ENCODE measurements at regions of chr1 and their contacts with region 1.

Region 1: GRCh38 chr1:199009447-199009846 is 370.6 kb downstream of the PTPRC start:
- DNase-seq: no peak
- H3K4me3 Mint-ChIP-seq: peak overlapping the region; percentile 35
- H3K27ac Mint-ChIP-seq: peak overlapping the region; percentile 64
- H3K4me1 Mint-ChIP-seq: peaks cover 47% of the 10 kb centered on the region
- H3K27me3 Mint-ChIP-seq: no peaks in the 10 kb centered on the region

Region 2: GRCh38 chr1:198959032-198959431 is 50.4 kb before region 1 on chr1:
- intact Hi-C with region 1: loop called (anchors 5 kb)
- DNase-seq: no peak
- H3K4me3 Mint-ChIP-seq: no peak overlapping the region
- H3K27ac Mint-ChIP-seq: peak overlapping the region; percentile 70
- H3K4me1 Mint-ChIP-seq: peaks cover 32% of the 10 kb centered on the region
- H3K27me3 Mint-ChIP-seq: no peaks in the 10 kb centered on the region

Region 3: GRCh38 chr1:199163670-199164069 is 154.2 kb after region 1 on chr1:
- intact Hi-C with region 1: loop called (anchors 5 kb)
- DNase-seq: no peak
- H3K4me3 Mint-ChIP-seq: peak overlapping the region; percentile 23
- H3K27ac Mint-ChIP-seq: no peak overlapping the region
- H3K4me1 Mint-ChIP-seq: peaks cover 42% of the 10 kb centered on the region
- H3K27me3 Mint-ChIP-seq: peaks cover 3% of the 10 kb centered on the region

Region 4: DNA sequence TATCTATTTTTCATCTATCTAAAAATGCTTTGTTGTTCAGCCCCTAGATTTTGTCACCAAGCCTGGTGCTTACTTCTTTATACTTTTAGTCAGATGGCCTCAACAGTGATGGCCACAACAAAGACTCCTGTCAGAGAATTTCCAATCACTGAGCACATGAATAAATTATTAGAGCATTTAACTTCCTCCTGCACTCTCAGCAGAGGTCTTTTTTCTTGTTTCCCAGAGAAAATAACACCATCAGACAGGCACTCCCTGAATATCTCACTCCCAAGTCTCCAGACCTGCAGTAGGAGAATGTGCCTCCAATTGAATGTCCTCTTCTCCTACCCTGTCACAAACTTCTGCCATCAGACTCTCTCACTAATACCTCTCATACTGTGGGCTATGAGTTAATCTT is 402.1 kb after region 1 on chr1:
- intact Hi-C with region 1: no loop called
- DNase-seq: no peak
- H3K4me3 Mint-ChIP-seq: no peak overlapping the region
- H3K27ac Mint-ChIP-seq: no peak overlapping the region
- H3K4me1 Mint-ChIP-seq: no peaks in the 10 kb centered on the region
- H3K27me3 Mint-ChIP-seq: no peaks in the 10 kb centered on the region